ENCODE measurements at regions of chr14 and their contacts with region 1.

Region 1: DNA sequence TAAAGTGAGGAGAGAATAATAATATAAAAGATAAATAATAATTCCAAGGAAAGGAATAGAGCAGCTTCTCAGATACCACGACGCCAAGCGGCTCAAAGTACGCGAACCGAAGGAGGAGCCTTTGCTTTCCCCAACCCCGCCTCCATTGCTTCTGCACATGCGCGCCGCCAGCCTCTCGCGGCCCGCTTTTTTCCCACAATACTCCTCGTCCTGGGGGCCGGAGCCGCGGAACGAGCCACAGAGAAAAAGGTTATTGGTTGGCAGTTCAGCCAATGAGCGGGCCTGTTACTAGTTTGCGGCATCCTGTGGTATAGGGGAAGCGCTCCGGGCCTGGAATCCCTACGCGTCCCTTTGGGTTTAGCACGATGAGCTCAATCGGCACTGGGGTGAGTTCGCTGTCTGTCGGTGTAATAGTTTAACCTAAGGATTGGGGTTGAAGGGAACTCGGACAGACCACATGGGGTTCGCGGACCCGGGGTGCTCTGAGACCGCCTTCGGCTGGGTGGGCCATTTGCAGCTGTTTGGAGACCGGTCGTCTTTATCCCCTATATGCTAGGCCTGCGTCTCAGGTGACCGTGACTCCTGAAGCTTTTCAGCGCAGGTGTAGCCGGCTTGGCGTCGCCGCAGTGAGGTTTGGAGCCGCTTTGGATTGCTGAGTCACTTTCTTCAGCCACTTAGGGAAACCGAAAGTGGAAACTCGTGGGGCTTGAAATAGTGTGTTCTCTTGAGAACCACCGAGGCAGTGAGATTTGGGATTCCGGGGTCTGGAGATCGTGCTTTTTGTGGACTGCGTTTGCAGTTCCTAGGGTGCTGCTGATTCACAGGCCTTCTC is at the start of gene PSMA3:
- DNase-seq: peak; percentile 93
- ATAC-seq: peak; percentile 92
- H3K4me3 ChIP-seq: peak within 1 kb of the TSS; percentile 69 to 82
- H3K27ac ChIP-seq: peak within 1 kb of the TSS; percentile 95
- H3K4me1 ChIP-seq: peaks cover 9 to 21% of the 10 kb centered on the region in 2 experiments
- H3K27me3 ChIP-seq: no peaks in the 10 kb centered on the region
- CTCF ChIP-seq: no peak
- POLR2A ChIP-seq: peak; percentile 90
- RAD21 ChIP-seq: no peak
- total RNA-seq, gene PSMA3: 267 TPM

Region 2: GRCh38 chr14:58088961-58089360 is 155.8 kb before region 1 on chr14:
- CTCF ChIA-PET with region 1: no interaction called
- POLR2A ChIA-PET with region 1: no interaction called
- RAD21 ChIA-PET with region 1: no interaction called
- intact Hi-C with region 1: no loop called
- DNase-seq: no peak
- ATAC-seq: no peak
- H3K4me3 ChIP-seq: no peak overlapping the region
- H3K27ac ChIP-seq: no peak overlapping the region
- H3K4me1 ChIP-seq: no peaks in the 10 kb centered on the region
- H3K27me3 ChIP-seq: no peaks in the 10 kb centered on the region
- CTCF ChIP-seq: no peak
- POLR2A ChIP-seq: no peak
- RAD21 ChIP-seq: no peak

Region 3: DNA sequence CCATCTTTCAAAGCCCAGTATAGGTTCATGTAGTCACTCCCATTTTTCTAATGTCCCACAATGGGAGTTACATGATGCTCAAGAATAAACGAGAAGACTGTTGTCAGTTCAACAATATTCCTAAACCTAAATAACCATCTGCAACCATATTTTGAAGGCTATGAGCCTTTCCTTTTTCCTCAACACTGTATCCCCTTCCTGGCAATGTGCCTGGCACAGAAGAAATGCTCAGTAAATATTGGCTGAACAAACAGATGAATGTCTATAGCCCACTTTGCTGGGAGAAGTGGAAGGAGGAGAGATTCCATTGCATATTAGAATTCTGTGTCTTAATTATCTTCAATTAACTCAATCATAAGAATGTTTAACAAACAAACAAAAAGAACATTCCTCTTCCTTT is 98.8 kb before region 1 on chr14:
- CTCF ChIA-PET with region 1: no interaction called
- POLR2A ChIA-PET with region 1: no interaction called
- RAD21 ChIA-PET with region 1: no interaction called
- intact Hi-C with region 1: no loop called
- DNase-seq: no peak
- ATAC-seq: no peak
- H3K4me3 ChIP-seq: no peak overlapping the region
- H3K27ac ChIP-seq: no peak overlapping the region
- H3K4me1 ChIP-seq: no peaks in the 10 kb centered on the region
- H3K27me3 ChIP-seq: peaks cover 33% of the 10 kb centered on the region
- CTCF ChIP-seq: no peak
- POLR2A ChIP-seq: no peak
- RAD21 ChIP-seq: no peak

Region 4: GRCh38 chr14:58199726-58200479 is 44.9 kb before region 1 on chr14 and contains the start of gene ACTR10:
- CTCF ChIA-PET with region 1: no interaction called
- POLR2A ChIA-PET with region 1: no interaction called
- RAD21 ChIA-PET with region 1: no interaction called
- intact Hi-C with region 1: loop called (anchors 2 kb)
- DNase-seq: peak; percentile 68
- ATAC-seq: peak; percentile 96
- H3K4me3 ChIP-seq: peak within 1 kb of the TSS; percentile 96 to 99
- H3K27ac ChIP-seq: peak within 1 kb of the TSS; percentile 63
- H3K4me1 ChIP-seq: peaks cover 13 to 17% of the 10 kb centered on the region in 2 experiments; a peak in 3 of 4 replicates
- H3K27me3 ChIP-seq: no peaks in the 10 kb centered on the region
- CTCF ChIP-seq: no peak
- POLR2A ChIP-seq: peak; percentile 61
- RAD21 ChIP-seq: no peak
- total RNA-seq, gene ACTR10: 39.6 TPM

Region 5: DNA sequence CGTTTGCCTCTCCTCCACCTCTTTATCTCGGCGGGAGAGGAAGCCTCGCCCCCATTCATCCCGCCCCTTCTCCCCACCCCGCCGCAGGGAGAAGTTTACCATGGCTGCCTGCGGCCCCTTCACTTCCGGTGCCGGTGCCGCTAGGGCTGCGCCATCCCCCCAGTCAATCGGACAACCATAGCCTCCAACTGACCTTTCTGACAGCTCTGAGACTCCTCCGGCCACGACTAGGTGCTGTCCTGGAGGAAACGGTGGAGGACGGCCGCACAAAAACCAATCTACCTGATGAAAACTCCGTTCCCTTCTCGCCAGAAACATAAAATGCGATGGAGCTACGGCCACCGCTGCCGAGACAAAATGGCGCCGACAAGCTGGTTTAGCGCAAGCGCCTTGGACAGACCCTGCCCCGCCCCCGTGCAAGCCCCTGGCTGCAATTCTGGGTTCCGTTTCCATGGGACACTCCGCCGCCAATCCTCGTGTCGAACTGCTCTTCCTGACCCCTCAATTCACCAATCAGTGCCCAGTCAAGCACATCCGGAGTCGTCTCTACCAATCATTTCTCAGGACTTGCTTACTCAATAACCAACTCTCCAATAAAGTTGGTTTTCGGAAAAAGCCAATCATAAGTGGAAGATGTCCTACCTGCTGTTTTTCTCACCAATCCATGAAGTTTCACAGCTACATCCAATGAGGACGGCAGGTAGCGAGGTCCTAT is 53.1 kb after region 1 on chr14:
- CTCF ChIA-PET with region 1: no interaction called
- POLR2A ChIA-PET with region 1: interaction called, 9 read pairs
- RAD21 ChIA-PET with region 1: no interaction called
- intact Hi-C with region 1: loop called (anchors 2 kb)
- DNase-seq: peak; percentile 100
- ATAC-seq: peak; percentile 89
- H3K4me3 ChIP-seq: peak overlapping the region; percentile 83 to 91
- H3K27ac ChIP-seq: peak overlapping the region; percentile 83
- H3K4me1 ChIP-seq: peaks cover 12 to 13% of the 10 kb centered on the region in 2 experiments
- H3K27me3 ChIP-seq: no peaks in the 10 kb centered on the region
- CTCF ChIP-seq: no peak
- POLR2A ChIP-seq: peak; percentile 61
- RAD21 ChIP-seq: no peak